ENCODE measurements at regions of chr16 and their contacts with region 1.

Region 1: DNA sequence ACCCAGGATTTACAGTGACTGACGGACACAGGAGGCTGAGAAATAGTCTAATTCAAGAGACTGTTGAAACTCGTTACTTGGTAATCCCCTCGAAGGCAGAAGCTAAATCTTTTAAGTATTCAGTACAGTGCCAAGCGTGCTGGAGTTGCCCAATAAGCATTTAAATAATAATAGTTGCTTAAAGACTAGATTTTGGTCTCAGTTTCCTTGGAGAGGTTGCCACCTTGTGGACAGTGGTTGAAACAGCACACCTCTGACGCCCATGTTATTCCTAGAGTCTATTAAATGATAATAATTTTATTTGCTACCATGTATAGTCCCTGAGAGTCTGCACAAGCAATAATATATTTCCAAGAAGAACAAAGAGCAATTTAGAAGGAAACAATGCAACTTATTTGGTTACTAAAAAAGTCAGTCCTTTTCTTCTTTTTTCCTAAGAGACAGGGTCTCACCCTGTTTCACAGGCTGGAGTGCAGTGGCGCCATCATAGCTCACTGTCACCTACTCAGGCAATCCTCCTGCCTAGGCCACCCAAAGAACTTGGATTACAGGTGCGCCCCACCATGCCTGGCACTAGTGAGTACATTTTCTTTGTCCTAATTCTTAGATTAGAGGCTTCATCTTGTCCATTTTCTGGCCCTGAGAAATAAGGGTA is 138.0 kb upstream of the NUDT7 start:
- DNase-seq: peak; percentile 29
- H3K4me3 ChIP-seq: no peak overlapping the region
- CTCF ChIP-seq: peak; percentile 63

Region 2: GRCh38 chr16:77236063-77236511 is 348.2 kb before region 1 on chr16:
- CTCF ChIA-PET with region 1: interaction called, 520 read pairs
- POLR2A ChIA-PET with region 1: no interaction called
- DNase-seq: no peak
- H3K4me3 ChIP-seq: peak overlapping the region; percentile 42
- CTCF ChIP-seq: peak; percentile 100

Region 3: GRCh38 chr16:77246150-77246549 is 338.2 kb before region 1 on chr16:
- CTCF ChIA-PET with region 1: interaction called, 520 read pairs
- POLR2A ChIA-PET with region 1: no interaction called
- DNase-seq: no peak
- H3K4me3 ChIP-seq: no peak overlapping the region
- CTCF ChIP-seq: no peak

Region 4: GRCh38 chr16:77596261-77596660 is 11.9 kb after region 1 on chr16:
- CTCF ChIA-PET with region 1: interaction called, 41 read pairs
- POLR2A ChIA-PET with region 1: no interaction called
- DNase-seq: no peak
- H3K4me3 ChIP-seq: no peak overlapping the region
- CTCF ChIP-seq: no peak

Region 5: GRCh38 chr16:77660311-77660710 is 76.0 kb after region 1 on chr16:
- CTCF ChIA-PET with region 1: interaction called, 22 read pairs
- POLR2A ChIA-PET with region 1: no interaction called
- DNase-seq: no peak
- H3K4me3 ChIP-seq: no peak overlapping the region
- CTCF ChIP-seq: peak; percentile 60

Region 6: GRCh38 chr16:77722309-77723107 is 138.2 kb after region 1 on chr16 and contains the start of gene NUDT7:
- CTCF ChIA-PET with region 1: no interaction called
- POLR2A ChIA-PET with region 1: no interaction called
- DNase-seq: peak; percentile 74
- H3K4me3 ChIP-seq: peak within 1 kb of the TSS; percentile 76
- CTCF ChIP-seq: peak; percentile 23